Left colon (tissue), 2 donors: ENCODE measurements at regions of chr11 and their contacts with region 1.

Region 1: DNA sequence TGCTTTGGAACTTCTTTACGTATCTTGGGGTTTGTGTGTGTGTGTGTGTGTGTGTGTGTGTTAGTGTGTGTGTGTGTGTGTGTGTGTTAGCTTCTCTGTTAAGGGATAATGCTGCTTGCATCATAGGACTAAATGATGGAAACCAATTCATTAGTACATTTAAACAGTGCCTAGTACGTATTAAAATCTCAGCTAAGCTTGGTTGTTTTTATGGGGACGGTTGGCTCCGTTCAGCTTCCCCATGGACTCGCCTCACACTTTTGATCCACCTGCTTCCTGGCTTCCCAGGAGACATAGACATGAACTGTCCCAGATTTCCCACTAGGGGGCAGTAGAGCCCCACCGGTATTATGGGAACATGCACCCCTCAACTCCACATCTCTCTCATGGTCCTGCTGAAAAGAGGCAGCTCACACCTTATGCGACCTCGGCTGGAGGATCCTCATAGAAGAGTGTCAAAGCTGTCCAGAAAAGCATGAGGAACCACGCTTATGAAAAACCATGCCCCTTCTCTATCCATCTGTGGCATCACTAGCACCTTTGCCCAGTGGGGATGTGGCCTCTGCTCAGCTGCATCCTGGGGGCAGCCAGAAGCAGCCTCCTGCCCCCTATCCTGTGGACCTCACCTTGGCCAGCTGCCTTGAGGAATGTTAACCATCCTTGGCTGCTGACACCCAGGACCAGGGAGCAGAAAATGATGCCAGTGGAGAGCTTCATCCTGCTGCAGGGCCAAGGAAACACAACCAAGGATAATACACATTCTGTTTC is 9.7 kb upstream of the SAAL1 start:
- DNase-seq: peak; percentile 29 to 47
- ATAC-seq: peak; percentile 92

Region 2: DNA sequence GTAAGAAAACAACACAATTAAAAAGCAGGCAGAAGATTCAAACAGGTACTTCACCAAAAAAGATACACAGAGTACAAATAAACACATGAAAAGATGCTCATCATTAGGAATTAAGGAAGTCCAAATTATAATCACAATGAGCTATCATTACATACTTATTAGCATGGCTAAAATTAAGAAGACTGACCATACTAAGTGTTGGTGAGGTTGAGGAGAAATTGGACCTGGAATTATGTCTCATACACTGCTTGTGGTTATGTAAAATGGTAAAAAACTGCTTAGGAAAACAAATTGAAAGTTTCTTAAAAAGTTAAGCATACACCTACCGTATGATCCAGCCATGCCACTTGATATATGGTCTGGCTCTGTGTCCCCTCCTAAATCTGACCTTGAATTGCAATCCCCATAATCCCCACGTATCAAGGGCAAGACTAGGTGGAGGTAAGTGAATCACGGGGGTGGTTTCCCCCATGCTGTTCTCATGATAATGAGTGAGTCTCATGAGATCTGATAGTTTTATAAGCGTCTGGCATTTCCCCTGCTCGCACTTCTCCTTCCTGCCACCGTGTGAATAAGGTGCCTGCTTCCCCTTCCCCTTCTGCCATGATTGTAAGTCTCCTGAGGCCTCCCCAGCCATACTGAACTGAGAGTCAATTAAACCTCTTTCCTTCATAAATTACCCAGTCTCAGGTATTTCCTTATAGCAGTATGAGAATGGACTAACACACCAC is 14.5 kb before region 1 on chr11:
- intact Hi-C with region 1: no loop called
- DNase-seq: no peak
- ATAC-seq: no peak

Region 3: DNA sequence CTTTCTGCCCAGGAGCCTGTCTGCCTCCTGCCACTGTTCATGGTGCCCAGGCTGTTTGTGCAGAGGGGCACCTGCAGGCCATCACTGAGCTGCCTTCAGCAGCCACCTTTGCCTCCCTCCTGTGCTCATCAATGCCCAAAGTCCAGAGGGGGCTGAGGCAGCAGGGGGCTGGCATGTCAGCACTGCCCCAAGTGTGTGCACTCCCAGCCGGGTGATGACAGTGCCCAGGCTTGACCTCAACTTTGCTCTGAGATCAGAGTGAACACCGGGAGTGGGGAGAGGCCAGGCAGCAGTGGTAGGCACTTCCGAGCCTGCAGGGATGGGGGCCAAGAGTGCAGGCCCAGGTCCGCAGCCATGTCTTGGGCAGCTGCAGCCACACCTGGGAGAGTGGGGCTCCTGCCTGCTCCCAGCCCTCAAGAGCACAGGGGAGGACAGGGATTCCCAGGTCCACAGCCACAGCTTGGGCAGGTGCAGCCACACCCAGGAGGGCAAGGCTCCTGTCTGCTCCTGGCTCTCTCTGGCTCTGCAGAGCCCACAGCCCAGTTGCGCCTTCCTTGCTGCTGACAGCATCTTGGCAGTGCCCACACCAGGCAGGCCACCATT is 105.8 kb after region 1 on chr11:
- intact Hi-C with region 1: no loop called
- DNase-seq: no peak
- ATAC-seq: no peak

Region 4: GRCh38 chr11:18749697-18750319 is 634.3 kb after region 1 on chr11:
- intact Hi-C with region 1: loop called in 1 of 2 experiments (anchors 10 kb)
- DNase-seq: no peak
- ATAC-seq: no peak